SK-N-SH (cell line): ENCODE measurements at regions of chr16 and their contacts with region 1.

Region 1: DNA sequence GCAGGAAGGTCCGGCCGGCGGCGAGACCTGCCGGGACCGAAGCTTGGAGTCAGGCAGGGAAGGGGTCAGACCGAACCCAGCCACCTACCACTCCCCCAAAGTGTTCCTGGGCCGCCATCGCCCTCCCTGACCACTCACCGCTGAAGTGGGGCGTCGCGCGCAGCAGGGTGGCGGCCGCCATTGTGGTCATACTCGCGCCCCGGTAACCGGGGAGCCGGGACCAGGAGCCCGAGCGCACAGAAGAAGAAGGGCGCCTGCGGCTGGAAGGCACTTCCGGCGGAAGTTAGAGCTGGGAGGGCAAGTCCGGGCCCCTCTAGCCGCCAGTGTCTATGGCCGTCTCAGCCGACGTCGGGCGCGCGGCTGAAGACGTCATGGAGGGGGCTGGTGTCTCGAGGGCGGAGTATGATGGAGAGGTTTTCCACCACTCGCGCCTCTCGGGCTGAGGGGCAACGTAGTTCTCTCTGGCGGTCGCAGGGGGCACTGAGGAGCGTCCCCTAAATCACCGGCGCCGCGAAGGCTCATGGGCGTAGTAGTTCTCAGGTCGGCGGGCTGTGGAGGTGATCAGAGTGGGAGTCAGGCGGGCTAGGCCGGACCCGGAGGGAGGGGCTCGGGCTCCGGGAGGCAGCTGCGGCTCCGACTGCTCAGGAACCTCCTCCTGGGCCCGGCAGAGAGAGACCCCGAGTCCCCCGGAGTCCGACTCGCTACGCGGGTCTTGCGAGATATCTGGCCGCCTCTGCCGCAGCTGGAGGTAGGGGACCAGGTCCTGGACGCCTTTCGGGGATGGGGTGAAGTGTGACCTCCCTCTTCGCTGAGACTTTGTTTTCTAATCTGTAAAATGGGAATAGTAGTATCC is at the start of gene TUFM:
- DNase-seq: peak; percentile 97
- H3K4me3 ChIP-seq: peak within 1 kb of the TSS; percentile 91 to 94
- H3K27ac ChIP-seq: peak within 1 kb of the TSS; percentile 63 to 80
- H3K4me1 ChIP-seq: peaks cover 7 to 14% of the 10 kb centered on the region in 2 experiments; a peak in 1 of 4 replicates
- H3K27me3 ChIP-seq: no peaks in the 10 kb centered on the region
- CTCF ChIP-seq: peak; percentile 63
- EP300 ChIP-seq: peak in 1 of 2 experiments; percentile 33; a peak in 2 of 4 replicates
- RAD21 ChIP-seq: peak; percentile 37
- polyA plus RNA-seq, gene TUFM: 300 and 358 TPM in 2 replicates

Region 2: DNA sequence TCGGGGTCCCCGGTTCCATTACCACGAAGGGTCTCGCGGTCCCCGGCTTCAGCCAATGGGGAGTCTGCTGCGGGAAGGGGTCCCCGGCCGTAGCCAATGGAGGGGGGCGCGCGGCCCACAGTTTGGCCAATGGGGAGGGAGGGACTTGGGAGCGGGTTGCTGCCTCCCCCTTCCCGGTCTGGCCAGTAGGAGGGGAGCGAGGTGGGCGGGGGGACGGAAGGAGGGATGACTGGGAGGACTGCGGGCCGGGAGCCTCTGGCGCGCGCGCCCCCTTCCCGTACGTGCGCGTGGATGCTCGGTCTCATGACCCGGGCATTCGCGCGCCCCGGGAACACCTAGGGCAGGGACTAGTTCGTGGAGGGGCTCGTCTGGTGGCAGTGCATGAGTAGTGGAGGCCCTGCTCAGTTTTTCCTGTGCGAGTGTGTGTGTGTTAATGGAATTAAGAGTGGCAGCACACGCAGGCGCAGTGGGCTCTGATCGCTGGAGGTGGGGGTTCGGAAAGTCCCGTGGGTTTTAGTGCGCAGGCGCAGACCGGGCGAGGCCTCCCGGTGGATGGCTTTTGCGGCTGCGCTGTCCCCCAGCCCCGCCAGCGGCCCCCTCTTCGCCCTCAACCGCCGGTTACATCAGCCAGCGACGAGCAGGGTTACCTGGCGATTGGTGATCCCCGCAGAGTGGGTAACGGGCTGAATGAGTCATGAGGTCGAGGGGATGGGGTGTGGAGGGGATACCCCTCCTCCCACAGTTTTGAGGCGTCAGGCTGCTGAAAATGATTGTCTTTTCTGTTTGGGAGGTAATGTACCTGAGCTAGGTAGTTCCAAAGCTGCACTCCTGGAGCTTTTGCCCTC is 22.2 kb before region 1 on chr16:
- CTCF ChIA-PET with region 1: interaction called, 7 read pairs
- POLR2A ChIA-PET with region 1: interaction called, 25 read pairs
- DNase-seq: peak; percentile 96
- H3K4me3 ChIP-seq: peak overlapping the region; percentile 81 to 90
- H3K27ac ChIP-seq: peak overlapping the region; percentile 91 to 95
- H3K4me1 ChIP-seq: peaks cover 9 to 13% of the 10 kb centered on the region in 2 experiments; a peak in 3 of 4 replicates
- H3K27me3 ChIP-seq: no peaks in the 10 kb centered on the region
- CTCF ChIP-seq: peak; percentile 33; the same call in 1 of the 2 replicates
- EP300 ChIP-seq: no peak
- RAD21 ChIP-seq: no peak

Region 3: DNA sequence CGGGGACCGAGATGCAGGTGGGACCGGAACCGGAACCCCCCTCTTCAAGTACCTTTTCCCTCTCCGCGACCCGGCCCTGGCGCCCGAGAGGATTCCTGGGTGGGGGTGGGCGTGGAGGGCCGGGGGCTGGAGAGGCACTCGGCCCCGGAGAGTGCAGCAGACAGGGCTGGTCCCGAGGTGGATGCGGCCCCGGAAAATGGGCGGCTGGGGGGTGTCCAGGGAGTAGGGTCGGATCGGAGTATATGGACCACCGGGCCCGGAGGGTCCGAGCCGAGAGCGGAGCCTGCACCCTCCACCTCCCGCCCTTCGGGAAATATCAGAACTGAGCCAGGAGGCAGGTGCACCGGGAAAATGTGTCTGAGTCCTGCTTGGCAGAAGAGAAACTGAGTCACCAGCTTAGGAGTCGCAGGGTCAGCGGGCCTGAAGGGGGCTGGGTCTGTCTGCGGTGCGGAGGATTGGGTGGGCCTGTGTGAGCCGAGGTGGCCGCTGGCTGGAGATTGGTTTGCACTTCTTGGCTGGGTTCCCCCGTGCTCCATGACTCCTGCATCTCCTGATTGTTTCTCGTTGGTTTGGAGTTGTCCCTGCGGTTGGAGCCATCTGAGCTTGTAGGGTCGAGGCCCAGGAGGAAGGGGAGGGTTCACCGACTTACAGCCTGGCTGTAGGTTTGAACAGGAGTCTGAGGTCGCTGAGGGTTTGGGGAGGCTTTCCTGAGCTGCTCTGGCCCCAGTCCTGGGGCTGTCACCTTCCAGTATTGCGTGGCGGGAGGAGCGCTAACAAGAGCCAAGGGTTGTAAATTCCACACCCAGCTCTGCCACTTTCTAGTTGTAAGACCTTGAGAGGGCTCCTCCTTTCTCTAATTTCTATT is 17.9 kb after region 1 on chr16:
- CTCF ChIA-PET with region 1: interaction called, 35 read pairs
- POLR2A ChIA-PET with region 1: interaction called, 57 read pairs
- DNase-seq: peak; percentile 60
- H3K4me3 ChIP-seq: peak overlapping the region; percentile 87 to 94
- H3K27ac ChIP-seq: peak overlapping the region; percentile 97 to 98
- H3K4me1 ChIP-seq: peaks cover 13 to 14% of the 10 kb centered on the region in 2 experiments; a peak in 3 of 4 replicates
- H3K27me3 ChIP-seq: no peaks in the 10 kb centered on the region
- CTCF ChIP-seq: no peak
- EP300 ChIP-seq: no peak
- RAD21 ChIP-seq: no peak

Region 4: DNA sequence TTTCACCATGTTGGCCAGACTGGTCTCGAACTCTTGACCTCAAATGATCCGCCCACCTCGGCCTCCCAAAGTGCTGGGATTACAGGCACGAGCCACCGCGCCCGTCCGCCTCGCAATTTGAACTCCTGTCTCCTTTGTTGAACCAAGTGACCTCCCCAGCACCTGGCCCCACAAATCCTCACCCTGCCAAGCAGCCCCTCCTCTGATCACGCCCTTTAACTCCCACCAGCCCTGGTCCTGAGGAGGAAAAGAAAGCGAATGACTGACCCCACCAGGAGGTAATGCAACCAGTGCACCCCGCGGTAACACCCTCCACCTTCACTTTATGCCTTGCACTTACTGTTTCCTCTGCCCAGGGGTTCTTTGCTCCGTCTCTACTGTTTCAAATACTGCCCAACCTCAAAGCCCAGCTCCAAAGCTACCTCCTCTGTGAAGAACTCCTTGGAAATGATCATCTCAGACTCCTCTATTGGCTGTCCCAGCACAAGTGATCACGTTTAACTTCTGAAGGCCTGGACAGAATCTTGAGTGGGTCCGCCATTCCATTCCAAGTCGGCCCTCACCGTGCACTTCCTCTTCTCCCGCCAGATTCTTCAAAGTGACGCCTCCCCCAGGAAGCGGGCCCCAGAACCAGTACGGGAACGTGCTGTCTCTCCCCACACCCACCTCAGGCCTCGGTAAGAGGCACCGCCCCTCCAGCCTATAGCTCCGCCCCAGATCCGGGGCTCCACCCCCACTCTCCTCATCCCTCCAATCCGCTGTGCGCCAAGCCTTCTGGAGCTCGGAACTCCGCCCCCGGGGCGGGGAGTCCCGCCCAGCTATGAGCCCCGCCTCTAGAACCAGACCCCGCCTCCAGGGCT is 89.8 kb after region 1 on chr16:
- CTCF ChIA-PET with region 1: no interaction called
- POLR2A ChIA-PET with region 1: no interaction called
- DNase-seq: peak; percentile 89
- H3K4me3 ChIP-seq: no peak overlapping the region
- H3K27ac ChIP-seq: no peak overlapping the region
- H3K4me1 ChIP-seq: no peaks in the 10 kb centered on the region
- H3K27me3 ChIP-seq: no peaks in the 10 kb centered on the region
- CTCF ChIP-seq: no peak
- EP300 ChIP-seq: no peak
- RAD21 ChIP-seq: no peak